ENCODE measurements at regions of chr20 and their contacts with region 1.

Region 1: GRCh38 chr20:63006540-63007359 is at the start of gene BHLHE23:
- DNase-seq: no peak
- H3K4me3 ChIP-seq: no peak within 1 kb of the TSS
- H3K27ac ChIP-seq: no peak within 1 kb of the TSS
- H3K4me1 ChIP-seq: peaks cover 0 to 13% of the 10 kb centered on the region in 2 donors
- H3K27me3 ChIP-seq: peaks cover 23 to 71% of the 10 kb centered on the region in 2 donors
- CTCF ChIP-seq: no peak
- POLR2A ChIP-seq: no peak
- total RNA-seq, gene BHLHE23: not detected

Region 2: GRCh38 chr20:62972270-62973032 is 34.3 kb before region 1 on chr20:
- intact Hi-C with region 1: loop called (anchors 2 kb)
- DNase-seq: peak; percentile 77 to 81
- H3K4me3 ChIP-seq: no peak overlapping the region
- H3K27ac ChIP-seq: no peak overlapping the region
- H3K4me1 ChIP-seq: no peaks in the 10 kb centered on the region
- H3K27me3 ChIP-seq: peaks cover 8 to 33% of the 10 kb centered on the region in 2 donors
- CTCF ChIP-seq: peak; percentile 78 to 94 (median 88)
- POLR2A ChIP-seq: no peak

Measured in uterus (tissue), 4 donors.